HEK293T (cell line): ENCODE measurements at regions of chr17 and their contacts with region 1.

Region 1: GRCh38 chr17:58059141-58059540 is 24.1 kb upstream of the DYNLL2 start:
- DNase-seq: no peak

Region 2: GRCh38 chr17:58032691-58033415 is 26.3 kb before region 1 on chr17:
- CTCF ChIA-PET with region 1: interaction called, 12 read pairs
- POLR2A ChIA-PET with region 1: no interaction called
- DNase-seq: no peak